Right cardiac atrium (tissue), 5 donors: ENCODE measurements at regions of chr4 and their contacts with region 1.

Region 1: DNA sequence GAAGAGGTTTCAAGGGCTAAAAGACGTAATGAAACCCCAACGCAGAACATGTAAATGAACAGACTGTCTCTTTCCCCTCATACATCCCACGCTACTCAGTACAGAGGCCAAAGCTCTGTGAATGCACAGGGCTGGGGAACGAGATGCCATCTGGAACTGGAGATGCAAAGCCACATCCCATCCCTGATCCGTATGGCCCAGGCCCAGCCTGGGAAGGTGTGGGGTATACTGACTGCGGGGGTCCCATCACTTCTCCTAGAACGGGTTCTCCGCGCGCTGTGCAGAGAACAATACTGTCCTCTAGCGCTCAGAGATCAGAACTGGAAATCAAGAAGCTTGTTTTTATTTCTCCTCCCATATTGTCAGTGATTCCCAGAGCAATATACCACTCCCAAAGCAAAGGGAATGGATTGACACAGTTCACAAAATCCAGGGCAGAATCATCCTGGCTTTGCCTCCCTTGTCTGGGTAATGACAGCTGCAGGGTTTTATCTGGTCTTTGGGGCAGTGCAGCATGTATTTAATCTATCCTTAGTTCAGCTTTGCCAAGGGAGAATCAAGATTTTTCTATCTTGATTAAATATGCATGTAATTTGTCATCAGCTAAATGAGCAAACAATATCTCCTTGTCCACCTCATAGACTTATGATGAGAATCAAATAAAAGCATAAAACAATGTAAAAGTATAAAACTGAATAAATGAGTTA is 47.3 kb upstream of the TLR3 start:
- DNase-seq: peak in 2 of 3 donors; percentile 31 to 63
- ATAC-seq: peak; percentile 73 to 80
- H3K4me3 ChIP-seq: no peak overlapping the region
- H3K27ac ChIP-seq: peak overlapping the region; percentile 36
- H3K4me1 ChIP-seq: no peaks in the 10 kb centered on the region
- H3K27me3 ChIP-seq: no peaks in the 10 kb centered on the region

Region 2: GRCh38 chr4:185640811-185641675 is 380.6 kb before region 1 on chr4:
- intact Hi-C with region 1: loop called (anchors 5 to 10 kb)
- DNase-seq: no peak
- ATAC-seq: no peak
- H3K4me3 ChIP-seq: no peak overlapping the region
- H3K27ac ChIP-seq: no peak overlapping the region
- H3K4me1 ChIP-seq: no peaks in the 10 kb centered on the region
- H3K27me3 ChIP-seq: no peaks in the 10 kb centered on the region

Region 3: GRCh38 chr4:185774845-185775680 is 246.6 kb before region 1 on chr4:
- intact Hi-C with region 1: loop called in 2 of 4 experiments (anchors 10 kb)
- DNase-seq: peak in 1 of 3 donors; percentile 50
- ATAC-seq: peak; percentile 55 to 70
- H3K4me3 ChIP-seq: peak overlapping the region; percentile 76
- H3K27ac ChIP-seq: peak overlapping the region; percentile 94
- H3K4me1 ChIP-seq: peaks cover 4% of the 10 kb centered on the region
- H3K27me3 ChIP-seq: no peaks in the 10 kb centered on the region

Region 4: DNA sequence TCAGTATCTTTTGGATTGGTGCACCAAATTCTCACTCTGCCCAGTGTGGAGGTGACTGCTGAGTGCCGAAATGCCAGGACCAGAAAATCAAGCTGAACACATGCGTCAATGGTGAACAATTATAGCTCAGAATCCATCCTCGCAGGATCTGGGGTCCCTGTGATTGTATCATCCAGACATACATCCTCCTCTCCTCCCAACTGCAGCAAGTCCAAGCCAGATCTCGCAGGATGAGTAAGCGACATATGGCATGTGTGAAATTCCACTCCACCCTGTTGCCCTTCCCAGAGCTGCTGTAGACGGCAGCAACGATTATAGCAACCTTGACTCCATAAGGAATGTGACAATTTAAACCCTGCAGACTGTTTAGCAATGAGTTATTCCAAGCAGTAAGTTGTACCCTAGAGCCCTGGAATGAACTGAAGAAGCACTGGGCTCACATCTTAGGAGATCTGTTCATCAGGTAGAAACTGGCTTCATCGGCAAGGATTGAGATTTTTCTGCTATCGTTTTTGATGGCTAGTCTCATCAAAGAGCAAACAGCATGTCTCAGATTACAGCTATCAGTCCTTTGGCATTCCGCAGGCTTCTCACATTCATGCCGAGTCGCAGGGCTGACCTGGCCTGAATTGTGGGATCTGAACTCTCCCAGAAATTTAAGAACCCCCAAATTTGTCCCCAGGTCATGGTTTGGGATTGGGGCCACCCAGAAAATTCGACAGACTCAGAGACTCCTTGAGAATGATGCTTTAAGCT is 174.1 kb before region 1 on chr4:
- intact Hi-C with region 1: loop called in 2 of 4 experiments (anchors 10 kb)
- DNase-seq: peak; percentile 69 to 85 (median 84)
- ATAC-seq: peak; percentile 88 to 92
- H3K4me3 ChIP-seq: no peak overlapping the region
- H3K27ac ChIP-seq: peak overlapping the region; percentile 89
- H3K4me1 ChIP-seq: peaks cover 6% of the 10 kb centered on the region
- H3K27me3 ChIP-seq: no peaks in the 10 kb centered on the region

Region 5: DNA sequence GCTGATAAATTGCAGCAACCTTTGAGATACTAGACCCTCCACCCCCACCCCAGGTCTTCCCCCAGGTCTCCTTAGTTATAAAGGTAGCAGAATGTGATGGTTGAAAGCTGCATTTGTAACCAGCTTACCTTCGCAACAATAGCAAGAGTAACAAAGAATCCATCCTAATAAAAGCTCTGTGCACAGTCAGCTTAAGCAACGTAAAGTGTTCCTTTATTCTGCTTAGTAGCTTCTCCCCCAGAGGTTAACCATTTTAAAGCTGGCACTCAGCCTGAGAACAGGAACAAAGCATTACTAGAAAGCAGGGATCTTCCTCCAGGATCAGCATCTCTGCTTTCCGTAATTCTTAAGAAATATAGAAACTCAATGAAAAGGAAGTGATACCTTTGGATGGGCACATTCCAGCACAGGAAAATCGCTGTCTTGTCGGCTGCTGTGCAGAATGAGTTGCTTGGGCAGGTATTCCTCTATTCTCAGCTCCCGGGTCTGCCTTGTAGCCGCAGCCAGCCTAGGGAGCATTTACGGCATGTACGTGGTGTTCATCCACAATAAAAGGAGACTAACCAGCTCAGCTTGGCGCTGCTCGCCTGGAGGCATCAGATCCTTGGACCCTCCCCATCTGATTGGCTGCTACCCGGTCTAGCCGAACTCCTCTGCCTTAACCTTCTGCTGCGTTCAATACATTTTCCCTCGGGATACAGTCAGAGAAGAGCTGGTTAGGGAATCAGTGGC is 65.6 kb before region 1 on chr4:
- intact Hi-C with region 1: no loop called
- DNase-seq: no peak
- ATAC-seq: no peak
- H3K4me3 ChIP-seq: no peak overlapping the region
- H3K27ac ChIP-seq: no peak overlapping the region
- H3K4me1 ChIP-seq: no peaks in the 10 kb centered on the region
- H3K27me3 ChIP-seq: no peaks in the 10 kb centered on the region

Region 6: GRCh38 chr4:186058253-186058979 is 36.8 kb after region 1 on chr4:
- intact Hi-C with region 1: no loop called
- DNase-seq: no peak
- ATAC-seq: no peak
- H3K4me3 ChIP-seq: no peak overlapping the region
- H3K27ac ChIP-seq: no peak overlapping the region
- H3K4me1 ChIP-seq: no peaks in the 10 kb centered on the region
- H3K27me3 ChIP-seq: no peaks in the 10 kb centered on the region